ENCODE measurements at regions of chr10 and their contacts with region 1.

Region 1: GRCh38 chr10:23158370-23158769 is 33.7 kb upstream of the PTF1A start:
- DNase-seq: peak; percentile 44
- H3K4me3 Mint-ChIP-seq: no peak overlapping the region
- H3K27ac Mint-ChIP-seq: no peak overlapping the region
- H3K4me1 Mint-ChIP-seq: peaks cover 2% of the 10 kb centered on the region
- H3K27me3 Mint-ChIP-seq: peaks cover 23% of the 10 kb centered on the region

Region 2: DNA sequence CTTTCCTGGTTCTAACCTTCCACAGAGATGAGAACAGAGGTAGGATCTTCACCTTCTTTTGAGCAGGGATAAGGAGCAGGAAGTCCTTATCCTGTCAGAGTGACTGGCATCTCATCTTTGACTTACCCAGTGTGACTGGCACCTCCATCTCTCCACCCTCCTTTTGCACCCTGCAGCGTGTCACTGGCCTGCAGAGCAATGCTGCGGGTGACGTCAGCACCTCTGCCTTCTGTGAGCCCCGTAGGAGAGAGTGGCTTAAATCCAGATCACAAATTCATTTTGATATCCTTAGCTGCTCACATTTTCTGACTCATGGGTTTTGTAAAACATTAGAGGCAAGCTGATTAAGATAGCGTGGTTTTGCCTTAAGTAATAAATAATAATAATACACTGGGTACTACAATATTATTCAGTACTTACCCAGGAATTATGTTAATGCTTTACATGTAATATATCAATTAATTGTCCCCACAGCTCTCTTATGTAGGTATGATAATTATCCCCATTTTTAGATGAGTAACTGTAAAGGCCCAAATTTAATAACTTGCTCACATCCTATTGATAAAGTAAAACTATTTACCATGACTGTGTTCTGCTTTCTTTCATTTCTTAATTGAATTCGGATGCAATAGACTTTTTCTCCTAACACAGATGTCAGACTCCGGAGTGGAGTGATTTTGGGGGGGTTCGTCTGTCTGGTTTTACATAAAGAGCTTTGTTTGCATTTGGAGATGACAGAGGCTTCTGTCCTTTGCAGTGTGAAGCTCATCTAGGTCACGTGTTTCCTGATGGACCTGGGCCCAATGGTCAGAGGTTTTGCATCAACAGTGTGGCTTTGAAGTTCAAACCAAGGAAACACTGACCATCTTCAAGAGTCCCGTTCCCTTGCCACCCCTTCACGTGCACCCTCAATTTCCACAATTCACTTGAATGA is 38.1 kb before region 1 on chr10:
- CTCF ChIA-PET with region 1: no interaction called
- POLR2A ChIA-PET with region 1: no interaction called
- intact Hi-C with region 1: no loop called
- DNase-seq: no peak
- H3K4me3 Mint-ChIP-seq: no peak overlapping the region
- H3K27ac Mint-ChIP-seq: no peak overlapping the region
- H3K4me1 Mint-ChIP-seq: no peaks in the 10 kb centered on the region
- H3K27me3 Mint-ChIP-seq: no peaks in the 10 kb centered on the region

Region 3: GRCh38 chr10:23293145-23293724 is 134.9 kb after region 1 on chr10:
- CTCF ChIA-PET with region 1: interaction called, 59 read pairs
- POLR2A ChIA-PET with region 1: no interaction called
- intact Hi-C with region 1: loop called (anchors 2 kb)
- DNase-seq: peak; percentile 53
- H3K4me3 Mint-ChIP-seq: no peak overlapping the region
- H3K27ac Mint-ChIP-seq: no peak overlapping the region
- H3K4me1 Mint-ChIP-seq: peaks cover 2% of the 10 kb centered on the region
- H3K27me3 Mint-ChIP-seq: peaks cover 14% of the 10 kb centered on the region

Region 4: DNA sequence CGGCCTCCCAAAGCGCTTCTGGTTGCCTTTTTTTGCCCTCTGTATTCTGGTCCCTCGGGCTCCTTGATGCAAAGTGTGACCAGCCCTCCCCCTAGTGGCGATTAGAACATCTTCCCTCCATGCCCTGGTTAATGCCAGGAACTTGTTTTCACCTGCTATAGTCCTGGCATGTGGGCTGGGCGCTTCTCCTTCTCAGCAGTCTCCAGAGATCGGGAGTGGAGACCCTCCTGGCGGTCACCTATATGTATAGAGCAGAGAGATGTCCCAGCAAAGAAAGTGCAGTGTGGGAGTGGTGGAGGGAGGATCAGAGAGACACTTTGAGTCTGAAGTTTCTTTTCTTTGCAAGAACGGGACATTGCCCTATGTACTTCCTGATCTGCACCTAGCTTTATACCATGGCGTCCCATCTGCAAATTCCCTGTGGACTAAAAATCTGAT is 544.6 kb after region 1 on chr10:
- CTCF ChIA-PET with region 1: interaction called, 3 read pairs
- POLR2A ChIA-PET with region 1: no interaction called
- intact Hi-C with region 1: loop called (anchors 2 kb)
- DNase-seq: peak; percentile 54
- H3K4me3 Mint-ChIP-seq: no peak overlapping the region
- H3K27ac Mint-ChIP-seq: no peak overlapping the region
- H3K4me1 Mint-ChIP-seq: no peaks in the 10 kb centered on the region
- H3K27me3 Mint-ChIP-seq: peaks cover 27% of the 10 kb centered on the region

Region 5: GRCh38 chr10:24197263-24197662 is 1038.9 kb after region 1 on chr10:
- CTCF ChIA-PET with region 1: interaction called, 5 read pairs
- POLR2A ChIA-PET with region 1: no interaction called
- intact Hi-C with region 1: loop called (anchors 5 kb)
- DNase-seq: no peak
- H3K4me3 Mint-ChIP-seq: no peak overlapping the region
- H3K27ac Mint-ChIP-seq: no peak overlapping the region
- H3K4me1 Mint-ChIP-seq: no peaks in the 10 kb centered on the region
- H3K27me3 Mint-ChIP-seq: peaks cover 9% of the 10 kb centered on the region

Measured in activated CD4-positive, alpha-beta memory T cell treated with anti-CD3 and anti-CD28 coated beads for 36 hours (primary cell).